ENCODE measurements at regions of chr2 and their contacts with region 1.

Region 1: GRCh38 chr2:13006829-13007717 is 290.3 kb downstream of the TRIB2 start:
- DNase-seq: peak; percentile 80
- H3K4me3 ChIP-seq: peak overlapping the region in 1 of 4 donors; percentile 2
- H3K27ac ChIP-seq: peak overlapping the region in 3 of 4 donors; percentile 42 to 53 (median 44)
- H3K4me1 ChIP-seq: peaks cover 0 to 20% (median 18%) of the 10 kb centered on the region in 4 donors
- H3K27me3 ChIP-seq: no peaks in the 10 kb centered on the region
- CTCF ChIP-seq: peak; percentile 57 to 90 (median 81)
- EP300 ChIP-seq: no peak
- POLR2A ChIP-seq: no peak

Region 2: GRCh38 chr2:11829947-11830707 is 1176.9 kb before region 1 on chr2:
- intact Hi-C with region 1: loop called (anchors 2 kb)
- DNase-seq: peak; percentile 84
- H3K4me3 ChIP-seq: peak overlapping the region; percentile 3 to 37 (median 27)
- H3K27ac ChIP-seq: peak overlapping the region; percentile 75 to 84 (median 80)
- H3K4me1 ChIP-seq: peaks cover 0 to 24% (median 22%) of the 10 kb centered on the region in 4 donors
- H3K27me3 ChIP-seq: no peaks in the 10 kb centered on the region
- CTCF ChIP-seq: peak in 2 of 4 experiments; percentile 5 to 27
- EP300 ChIP-seq: no peak
- POLR2A ChIP-seq: no peak

Region 3: GRCh38 chr2:11863513-11864328 is 1143.4 kb before region 1 on chr2:
- intact Hi-C with region 1: loop called (anchors 1 kb)
- DNase-seq: peak; percentile 93
- H3K4me3 ChIP-seq: peak overlapping the region in 1 of 4 donors; percentile 15
- H3K27ac ChIP-seq: peak overlapping the region; percentile 7 to 55 (median 42)
- H3K4me1 ChIP-seq: peaks cover 0 to 15% (median 13%) of the 10 kb centered on the region in 4 donors
- H3K27me3 ChIP-seq: no peaks in the 10 kb centered on the region
- CTCF ChIP-seq: peak; percentile 92 to 97 (median 97)
- EP300 ChIP-seq: peak in 1 of 4 donors; percentile 8
- POLR2A ChIP-seq: no peak

Region 4: DNA sequence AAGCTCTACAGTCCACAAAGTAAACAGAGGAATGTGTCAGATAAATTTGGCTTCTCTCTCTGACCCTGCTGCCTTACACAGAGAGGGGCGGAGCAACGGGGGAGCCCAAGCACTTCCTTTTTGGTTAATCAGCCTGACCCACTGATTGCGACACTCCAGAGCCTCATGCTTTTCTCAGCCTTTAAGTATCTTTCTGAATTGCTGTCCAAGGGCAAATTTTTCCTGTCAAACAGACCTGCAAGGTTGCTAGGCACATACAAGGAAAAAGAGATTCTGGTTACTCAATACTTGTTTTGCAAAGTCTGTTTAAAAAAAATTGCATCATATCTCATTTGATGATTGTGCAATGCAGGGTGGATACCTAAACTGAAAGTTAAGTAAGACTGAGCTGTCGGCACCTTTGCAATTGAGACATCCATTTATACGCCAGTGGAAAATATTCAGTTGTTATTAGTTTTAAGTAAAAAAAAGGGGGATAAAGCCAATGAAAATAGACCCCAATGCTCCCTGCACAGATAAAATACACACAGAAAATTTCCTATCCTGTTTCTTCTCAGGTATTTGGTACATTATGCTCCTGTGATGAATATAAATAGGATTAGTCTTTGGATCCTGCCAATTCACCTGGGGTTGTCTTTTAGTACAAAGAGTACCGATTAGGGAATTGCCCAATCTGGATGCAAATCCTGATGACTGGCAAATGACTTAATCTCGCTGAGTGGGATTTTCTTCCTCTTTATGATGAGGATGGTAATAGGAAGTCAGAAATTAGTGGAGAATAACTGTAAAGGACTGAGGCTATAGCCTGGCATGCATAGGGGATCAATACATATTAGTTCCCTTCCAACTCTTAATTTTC is 550.6 kb before region 1 on chr2:
- intact Hi-C with region 1: loop called (anchors 10 kb)
- DNase-seq: peak; percentile 97
- H3K4me3 ChIP-seq: no peak overlapping the region
- H3K27ac ChIP-seq: peak overlapping the region; percentile 56 to 68 (median 62)
- H3K4me1 ChIP-seq: peaks cover 0 to 36% (median 19%) of the 10 kb centered on the region in 4 donors
- H3K27me3 ChIP-seq: no peaks in the 10 kb centered on the region
- CTCF ChIP-seq: no peak
- EP300 ChIP-seq: peak; percentile 15 to 78 (median 47)
- POLR2A ChIP-seq: no peak

Measured in sigmoid colon (tissue), 7 donors.